Activated B cell treated with CpG ODN at 0.5 μM for 24 hours (primary cell): ENCODE measurements at regions of chr15 and their contacts with region 1.

Region 1: DNA sequence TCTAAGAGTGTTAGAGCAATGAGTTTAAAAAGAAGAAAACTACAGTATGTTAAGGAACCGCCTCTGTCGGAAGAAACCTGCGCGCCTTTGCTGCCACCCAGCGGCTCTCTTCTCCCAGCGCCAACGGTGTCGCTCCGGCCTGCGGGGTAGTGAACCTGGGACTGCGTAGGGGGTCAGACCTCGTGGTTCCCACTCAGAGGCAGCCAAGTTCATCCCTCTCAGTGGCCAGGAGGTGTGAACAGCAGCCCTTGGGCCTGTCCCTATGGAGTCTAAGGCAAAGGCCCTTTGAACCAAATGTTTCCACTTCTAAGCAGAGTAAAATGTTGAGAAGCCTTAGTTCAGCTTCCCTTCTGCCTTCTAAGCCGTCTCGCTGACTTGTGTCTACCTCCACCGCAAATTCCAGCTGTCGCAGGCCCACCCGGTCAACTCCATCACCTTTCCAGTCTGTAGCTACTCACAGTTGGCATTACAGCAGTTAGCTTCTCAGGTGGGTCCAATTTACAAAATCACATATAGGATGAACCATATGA is 980 bp upstream of the RAB27A start:
- DNase-seq: peak; percentile 75
- ATAC-seq: peak; percentile 81
- H3K4me3 Mint-ChIP-seq: peak overlapping the region; percentile 89
- H3K27ac Mint-ChIP-seq: peak overlapping the region; percentile 83
- H3K4me1 Mint-ChIP-seq: peaks cover 22% of the 10 kb centered on the region
- H3K27me3 Mint-ChIP-seq: no peaks in the 10 kb centered on the region
- CTCF ChIP-seq: peak; percentile 78

Region 2: GRCh38 chr15:55168329-55168974 is 122.1 kb before region 1 on chr15:
- CTCF ChIA-PET with region 1: no interaction called
- POLR2A ChIA-PET with region 1: no interaction called
- intact Hi-C with region 1: loop called (anchors 1 kb)
- DNase-seq: no peak
- ATAC-seq: peak; percentile 71
- H3K4me3 Mint-ChIP-seq: no peak overlapping the region
- H3K27ac Mint-ChIP-seq: no peak overlapping the region
- H3K4me1 Mint-ChIP-seq: no peaks in the 10 kb centered on the region
- H3K27me3 Mint-ChIP-seq: no peaks in the 10 kb centered on the region
- CTCF ChIP-seq: no peak

Region 3: GRCh38 chr15:55255714-55256113 is 34.9 kb before region 1 on chr15:
- CTCF ChIA-PET with region 1: no interaction called
- POLR2A ChIA-PET with region 1: interaction called, 3 read pairs
- intact Hi-C with region 1: loop called (anchors 2 kb)
- DNase-seq: no peak
- ATAC-seq: peak; percentile 47
- H3K4me3 Mint-ChIP-seq: peak overlapping the region; percentile 74
- H3K27ac Mint-ChIP-seq: peak overlapping the region; percentile 86
- H3K4me1 Mint-ChIP-seq: peaks cover 64% of the 10 kb centered on the region
- H3K27me3 Mint-ChIP-seq: no peaks in the 10 kb centered on the region
- CTCF ChIP-seq: no peak

Region 4: GRCh38 chr15:55277116-55277564 is 13.5 kb before region 1 on chr15:
- CTCF ChIA-PET with region 1: no interaction called
- POLR2A ChIA-PET with region 1: no interaction called
- intact Hi-C with region 1: loop called (anchors 1 kb)
- DNase-seq: no peak
- ATAC-seq: peak; percentile 67
- H3K4me3 Mint-ChIP-seq: peak overlapping the region; percentile 29
- H3K27ac Mint-ChIP-seq: peak overlapping the region; percentile 76
- H3K4me1 Mint-ChIP-seq: peaks cover 69% of the 10 kb centered on the region
- H3K27me3 Mint-ChIP-seq: no peaks in the 10 kb centered on the region
- CTCF ChIP-seq: no peak

Region 5: DNA sequence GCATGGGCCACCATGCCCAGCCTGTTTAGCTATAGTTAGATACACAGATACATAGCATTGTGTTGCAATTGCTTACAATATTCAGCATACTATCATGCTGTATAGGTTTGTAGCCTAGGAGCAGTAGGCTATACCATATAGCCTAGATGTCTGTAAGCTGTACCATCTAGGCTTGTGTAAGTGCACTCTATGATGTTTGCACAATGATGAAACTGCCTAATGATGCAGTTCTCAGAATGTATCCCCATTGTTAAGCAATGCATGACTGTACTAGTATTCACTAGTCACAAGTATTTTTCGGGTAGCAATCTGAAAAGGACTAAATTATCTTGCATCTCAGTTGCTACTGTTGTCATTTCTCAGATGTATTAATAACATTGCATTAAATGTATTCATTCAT is 44.4 kb after region 1 on chr15:
- CTCF ChIA-PET with region 1: no interaction called
- POLR2A ChIA-PET with region 1: no interaction called
- intact Hi-C with region 1: no loop called
- DNase-seq: no peak
- ATAC-seq: no peak
- H3K4me3 Mint-ChIP-seq: no peak overlapping the region
- H3K27ac Mint-ChIP-seq: no peak overlapping the region
- H3K4me1 Mint-ChIP-seq: no peaks in the 10 kb centered on the region
- H3K27me3 Mint-ChIP-seq: no peaks in the 10 kb centered on the region
- CTCF ChIP-seq: no peak

Region 6: DNA sequence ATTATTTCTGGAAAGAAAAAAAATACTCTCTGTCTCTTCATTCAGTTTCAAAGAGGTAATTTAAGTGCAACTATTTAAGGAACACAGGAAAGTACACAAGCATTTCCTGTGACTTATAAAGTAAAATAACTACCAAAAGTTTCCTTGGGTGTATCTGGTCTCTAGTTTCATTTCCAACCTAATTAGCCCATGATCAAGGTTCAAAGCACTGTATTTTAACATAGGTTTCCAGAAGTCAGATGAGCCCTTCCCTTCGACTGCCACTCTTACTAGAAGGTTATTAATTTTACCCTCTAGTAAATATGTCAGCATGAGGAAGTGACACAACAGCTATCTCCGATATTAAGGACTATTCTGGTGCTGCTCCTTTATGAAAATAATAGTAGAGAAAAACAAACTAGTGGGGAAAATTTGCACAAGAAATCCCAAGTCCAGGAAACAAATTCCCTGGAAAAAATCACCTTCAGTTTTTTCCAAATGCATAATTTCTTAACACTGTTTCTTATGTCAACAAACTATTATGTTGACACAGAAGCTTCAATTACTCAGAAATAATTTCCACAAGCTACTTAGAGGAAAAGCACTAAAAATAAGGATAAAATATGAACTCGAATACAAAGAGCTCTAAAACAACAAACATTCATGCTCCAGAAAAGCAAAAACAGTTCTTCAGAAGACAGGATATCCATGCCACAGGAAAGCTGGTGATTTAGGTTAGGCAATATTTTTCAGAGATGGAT is 82.3 kb after region 1 on chr15:
- CTCF ChIA-PET with region 1: no interaction called
- POLR2A ChIA-PET with region 1: no interaction called
- intact Hi-C with region 1: no loop called
- DNase-seq: no peak
- ATAC-seq: no peak
- H3K4me3 Mint-ChIP-seq: no peak overlapping the region
- H3K27ac Mint-ChIP-seq: no peak overlapping the region
- H3K4me1 Mint-ChIP-seq: peaks cover 12% of the 10 kb centered on the region
- H3K27me3 Mint-ChIP-seq: no peaks in the 10 kb centered on the region
- CTCF ChIP-seq: no peak

Region 7: DNA sequence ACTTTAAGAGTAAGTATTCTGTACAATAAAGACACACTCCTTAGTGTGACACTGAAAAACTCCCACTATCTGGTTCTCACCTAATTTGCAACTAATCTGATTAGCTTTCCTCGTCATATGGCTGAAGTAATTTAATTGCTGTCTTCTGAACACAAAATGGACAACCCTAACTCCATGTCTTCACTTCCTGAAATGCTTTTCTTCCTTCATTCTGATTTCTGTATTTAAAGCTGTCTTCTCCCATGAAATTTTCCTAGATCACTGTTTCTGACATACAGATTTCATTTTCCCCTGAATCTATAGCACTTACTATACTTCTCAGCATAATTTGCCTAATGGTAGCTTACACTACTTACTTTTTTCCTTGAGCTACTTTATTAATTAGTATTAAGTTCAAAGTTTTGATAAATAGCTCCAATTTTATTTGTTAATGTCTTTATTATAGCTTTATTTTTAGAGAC is 111.2 kb after region 1 on chr15:
- CTCF ChIA-PET with region 1: no interaction called
- POLR2A ChIA-PET with region 1: no interaction called
- intact Hi-C with region 1: no loop called
- DNase-seq: no peak
- ATAC-seq: no peak
- H3K4me3 Mint-ChIP-seq: no peak overlapping the region
- H3K27ac Mint-ChIP-seq: no peak overlapping the region
- H3K4me1 Mint-ChIP-seq: peaks cover 23% of the 10 kb centered on the region
- H3K27me3 Mint-ChIP-seq: no peaks in the 10 kb centered on the region
- CTCF ChIP-seq: no peak

Region 8: GRCh38 chr15:55434989-55435825 is 144.6 kb after region 1 on chr15:
- CTCF ChIA-PET with region 1: interaction called, 5 read pairs
- POLR2A ChIA-PET with region 1: no interaction called
- intact Hi-C with region 1: loop called (anchors 1 kb)
- DNase-seq: no peak
- ATAC-seq: no peak
- H3K4me3 Mint-ChIP-seq: no peak overlapping the region
- H3K27ac Mint-ChIP-seq: no peak overlapping the region
- H3K4me1 Mint-ChIP-seq: no peaks in the 10 kb centered on the region
- H3K27me3 Mint-ChIP-seq: no peaks in the 10 kb centered on the region
- CTCF ChIP-seq: no peak